PC-3 (cell line): ENCODE measurements at regions of chr11 and their contacts with region 1.

Region 1: DNA sequence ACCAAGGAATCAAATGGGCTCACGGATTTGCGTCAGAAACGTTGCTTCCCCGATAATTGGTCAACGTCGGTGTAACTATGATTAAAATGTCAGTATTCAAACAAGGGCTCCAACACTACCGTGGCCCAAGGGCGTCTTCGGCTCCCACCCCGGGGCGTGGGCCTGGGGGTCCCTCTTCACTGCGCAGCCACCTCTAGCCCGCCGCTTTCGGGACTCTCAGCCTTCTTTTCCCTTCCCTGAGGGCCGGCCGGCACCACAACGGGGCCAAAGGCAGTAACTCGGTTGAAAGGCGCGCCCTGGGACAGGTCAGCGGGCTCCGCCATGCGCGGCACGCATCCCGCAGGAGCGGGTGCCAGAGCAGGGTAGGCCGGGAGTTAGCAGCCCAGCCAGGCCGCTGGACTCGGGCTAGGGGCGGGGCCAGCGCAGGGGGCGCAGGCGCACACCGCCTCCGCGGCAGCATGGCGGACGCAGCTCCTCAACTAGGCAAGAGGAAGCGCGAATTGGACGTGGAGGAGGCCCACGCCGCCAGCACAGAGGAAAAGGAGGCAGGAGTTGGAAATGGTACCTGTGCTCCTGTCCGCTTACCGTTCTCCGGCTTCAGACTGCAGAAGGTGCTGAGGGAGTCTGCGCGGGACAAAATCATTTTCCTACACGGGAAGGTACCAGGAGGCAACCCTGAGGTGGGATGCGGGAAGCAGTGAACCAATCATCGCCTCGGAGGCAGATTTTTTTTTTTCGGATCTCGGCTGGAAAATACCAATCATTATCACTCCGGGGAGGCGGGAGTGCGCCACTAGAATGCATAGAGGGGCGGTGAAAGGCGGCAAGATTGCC is at the start of gene DCPS:
- DNase-seq: peak; percentile 95
- ATAC-seq: peak; percentile 96
- H3K4me3 ChIP-seq: peak within 1 kb of the TSS; percentile 78
- H3K27ac ChIP-seq: peak within 1 kb of the TSS; percentile 75
- H3K4me1 ChIP-seq: peaks cover 25% of the 10 kb centered on the region
- H3K27me3 ChIP-seq: no peaks in the 10 kb centered on the region
- CTCF ChIP-seq: no peak
- total RNA-seq, gene DCPS: 52.6 and 55.1 TPM in 2 replicates

Region 2: GRCh38 chr11:126217491-126217890 is 86.3 kb before region 1 on chr11:
- CTCF ChIA-PET with region 1: no interaction called
- POLR2A ChIA-PET with region 1: no interaction called
- intact Hi-C with region 1: no loop called
- DNase-seq: no peak
- ATAC-seq: no peak
- H3K4me3 ChIP-seq: no peak overlapping the region
- H3K27ac ChIP-seq: no peak overlapping the region
- H3K4me1 ChIP-seq: peaks cover 11% of the 10 kb centered on the region
- H3K27me3 ChIP-seq: no peaks in the 10 kb centered on the region
- CTCF ChIP-seq: no peak

Region 3: DNA sequence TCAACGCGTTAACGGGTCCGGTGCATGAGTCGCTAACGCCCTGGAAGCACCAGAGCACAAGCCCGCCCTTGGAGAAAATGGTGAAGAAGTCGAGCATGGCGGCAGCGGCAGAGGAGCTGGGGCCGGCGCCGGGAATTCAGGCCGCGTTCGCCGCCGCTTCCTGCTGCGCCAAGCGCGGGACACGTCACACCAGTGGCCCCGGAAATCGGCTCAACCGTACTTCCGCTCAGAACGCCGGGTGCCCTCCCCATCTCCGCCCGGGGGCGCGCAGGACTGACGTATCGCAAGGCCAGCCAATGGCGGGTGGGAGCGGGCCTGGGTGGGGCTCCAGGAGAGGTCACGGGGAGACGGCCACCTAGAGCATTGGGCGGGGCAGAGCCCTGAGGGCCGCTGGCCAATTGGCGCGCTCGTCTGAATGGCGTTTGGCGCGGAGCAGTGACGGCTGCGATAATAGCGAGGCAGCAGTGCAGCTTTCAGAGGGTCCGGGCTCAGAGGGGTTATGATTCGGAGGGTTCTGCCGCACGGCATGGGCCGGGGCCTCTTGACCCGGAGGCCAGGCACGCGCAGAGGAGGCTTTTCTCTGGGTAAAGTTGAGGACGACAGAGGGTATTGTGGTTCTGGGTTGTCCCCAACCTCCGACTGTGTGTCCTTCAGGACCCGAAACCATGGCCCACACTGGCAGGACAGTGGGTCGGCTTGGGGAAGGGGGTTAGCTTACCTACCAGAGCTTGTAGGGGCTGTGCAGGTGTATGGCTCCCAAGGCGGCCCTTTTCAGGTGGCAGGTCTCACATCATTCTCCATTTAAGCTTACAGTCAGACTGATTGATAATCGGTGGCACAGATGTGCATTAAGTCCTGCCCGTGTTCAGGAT is 34.9 kb before region 1 on chr11 and contains the starts of genes FOXRED1 and SRPRA:
- CTCF ChIA-PET with region 1: no interaction called
- POLR2A ChIA-PET with region 1: interaction called, 6 read pairs
- intact Hi-C with region 1: loop called (anchors 1 kb)
- DNase-seq: peak; percentile 100
- ATAC-seq: peak; percentile 96
- H3K4me3 ChIP-seq: peak within 1 kb of the TSS; percentile 96
- H3K27ac ChIP-seq: peak within 1 kb of the TSS; percentile 61
- H3K4me1 ChIP-seq: peaks cover 10% of the 10 kb centered on the region
- H3K27me3 ChIP-seq: no peaks in the 10 kb centered on the region
- CTCF ChIP-seq: no peak
- total RNA-seq, gene FOXRED1: 55.6 and 72.0 TPM in 2 replicates
- total RNA-seq, gene SRPRA: 140 and 143 TPM in 2 replicates

Region 4: DNA sequence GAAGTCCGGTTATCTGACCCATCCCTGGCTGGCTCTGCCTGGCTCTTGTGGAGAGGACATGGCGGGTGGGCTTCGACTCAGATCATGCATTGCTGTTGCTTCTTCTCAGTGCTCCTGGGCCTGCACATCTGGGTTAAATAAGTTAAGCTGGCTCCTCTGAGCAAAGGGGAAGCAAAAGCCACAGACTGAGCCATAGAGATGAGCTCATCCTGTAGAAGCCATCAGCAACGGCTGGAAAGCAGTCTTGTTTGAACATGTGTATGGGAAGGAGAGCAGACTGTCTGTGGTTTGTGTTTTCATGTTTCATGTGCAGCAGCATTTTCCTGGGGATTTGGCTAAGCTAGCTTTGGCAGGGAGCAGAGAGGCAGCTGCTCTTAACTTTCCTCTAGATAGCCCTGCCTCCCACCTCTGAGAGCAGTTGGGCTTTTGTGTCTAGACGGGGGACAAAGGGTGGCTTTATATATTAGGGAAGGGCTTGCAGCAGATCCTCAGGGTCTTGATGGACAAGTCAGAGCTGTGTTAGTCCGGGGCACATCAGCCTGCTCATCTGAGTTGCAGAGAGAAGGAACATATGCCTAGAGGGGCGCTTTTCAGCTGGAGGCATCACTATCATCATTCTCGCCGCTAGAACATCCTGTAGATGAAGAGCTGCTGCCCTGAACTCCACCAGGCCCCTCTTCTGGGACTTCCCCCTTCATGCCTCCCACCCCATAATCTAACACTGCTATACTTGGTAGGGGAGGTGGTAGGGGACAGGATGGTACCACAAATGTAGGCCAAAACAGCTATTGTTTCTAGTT is 14.9 kb after region 1 on chr11:
- CTCF ChIA-PET with region 1: no interaction called
- POLR2A ChIA-PET with region 1: no interaction called
- intact Hi-C with region 1: no loop called
- DNase-seq: peak; percentile 43
- ATAC-seq: peak; percentile 80
- H3K4me3 ChIP-seq: no peak overlapping the region
- H3K27ac ChIP-seq: peak overlapping the region; percentile 15
- H3K4me1 ChIP-seq: peaks cover 17% of the 10 kb centered on the region
- H3K27me3 ChIP-seq: no peaks in the 10 kb centered on the region
- CTCF ChIP-seq: no peak

Region 5: GRCh38 chr11:126480410-126481302 is 176.8 kb after region 1 on chr11:
- CTCF ChIA-PET with region 1: interaction called, 4 read pairs
- POLR2A ChIA-PET with region 1: no interaction called
- intact Hi-C with region 1: loop called (anchors 1 kb)
- DNase-seq: peak; percentile 93
- ATAC-seq: peak; percentile 74
- H3K4me3 ChIP-seq: peak overlapping the region; percentile 30; the same call in 1 of the 2 replicates
- H3K27ac ChIP-seq: no peak overlapping the region
- H3K4me1 ChIP-seq: peaks cover 15% of the 10 kb centered on the region
- H3K27me3 ChIP-seq: no peaks in the 10 kb centered on the region
- CTCF ChIP-seq: peak; percentile 98

Region 6: DNA sequence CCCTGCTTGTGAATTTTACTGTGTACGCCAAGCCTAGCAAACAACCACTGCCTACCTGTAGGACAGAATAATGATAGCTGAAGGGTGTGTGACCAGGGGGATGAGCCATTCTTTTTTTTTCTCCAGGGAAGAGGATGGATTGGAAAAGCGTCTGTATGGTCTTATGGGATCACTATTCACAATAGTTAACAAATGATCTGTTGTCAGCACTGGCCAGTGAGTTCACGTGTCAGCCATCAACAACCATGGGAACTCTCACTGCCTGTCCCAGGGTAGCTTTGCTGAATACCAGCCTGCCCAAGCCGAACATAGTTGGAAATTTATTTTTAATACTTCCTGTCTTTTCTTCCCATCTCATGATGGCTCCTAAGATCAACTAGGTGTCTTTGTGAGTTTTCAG is 221.9 kb after region 1 on chr11:
- CTCF ChIA-PET with region 1: no interaction called
- POLR2A ChIA-PET with region 1: no interaction called
- intact Hi-C with region 1: no loop called
- DNase-seq: no peak
- ATAC-seq: no peak
- H3K4me3 ChIP-seq: no peak overlapping the region
- H3K27ac ChIP-seq: no peak overlapping the region
- H3K4me1 ChIP-seq: no peaks in the 10 kb centered on the region
- H3K27me3 ChIP-seq: peaks cover 75% of the 10 kb centered on the region
- CTCF ChIP-seq: no peak